Activated CD8-positive, alpha-beta T cell treated with anti-CD3 and anti-CD28 coated beads for 36 hours (primary cell): ENCODE measurements at regions of chr19 and their contacts with region 1.

Region 1: GRCh38 chr19:46600384-46601317 is 479 bp upstream of the CALM3 start:
- DNase-seq: peak; percentile 99
- ATAC-seq: peak; percentile 90
- H3K4me3 Mint-ChIP-seq: peak overlapping the region; percentile 99
- H3K27ac Mint-ChIP-seq: peak overlapping the region; percentile 100
- H3K4me1 Mint-ChIP-seq: peaks cover 27% of the 10 kb centered on the region
- H3K27me3 Mint-ChIP-seq: no peaks in the 10 kb centered on the region
- CTCF ChIP-seq: no peak

Region 2: DNA sequence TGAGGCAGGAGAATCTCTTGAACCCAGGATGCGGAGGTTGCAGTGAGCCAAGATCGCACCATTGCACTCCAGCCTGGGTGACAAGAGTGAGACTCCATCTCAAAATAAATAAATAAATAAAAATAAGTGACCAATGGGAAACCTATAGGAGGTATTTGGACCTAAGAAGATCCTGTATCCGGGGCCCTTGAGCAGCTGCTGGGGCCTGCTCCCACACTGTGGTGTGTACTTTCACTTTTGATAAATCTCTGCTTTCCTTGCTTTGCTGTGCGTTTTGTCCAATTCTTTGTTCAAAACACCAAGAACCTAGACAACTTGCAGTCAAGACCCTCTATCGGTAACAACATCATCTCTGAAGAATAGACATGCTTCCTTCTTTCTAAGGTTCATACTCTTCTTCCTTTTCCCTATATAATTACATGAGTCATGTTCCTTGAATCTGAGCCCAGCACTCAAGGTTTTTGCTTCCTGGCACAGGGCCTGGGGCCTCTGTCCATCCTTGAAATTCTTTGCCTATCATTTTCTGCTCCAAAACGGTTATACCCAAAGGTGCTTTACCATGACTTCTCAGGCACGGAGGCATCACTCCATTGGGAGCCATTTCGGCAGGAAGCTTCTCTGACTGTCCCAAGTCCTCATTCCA is 157.7 kb before region 1 on chr19:
- CTCF ChIA-PET with region 1: no interaction called
- POLR2A ChIA-PET with region 1: no interaction called
- intact Hi-C with region 1: no loop called
- DNase-seq: no peak
- ATAC-seq: no peak
- H3K4me3 Mint-ChIP-seq: no peak overlapping the region
- H3K27ac Mint-ChIP-seq: no peak overlapping the region
- H3K4me1 Mint-ChIP-seq: no peaks in the 10 kb centered on the region
- H3K27me3 Mint-ChIP-seq: peaks cover 6% of the 10 kb centered on the region
- CTCF ChIP-seq: no peak

Region 3: GRCh38 chr19:46579361-46579879 is 21.2 kb before region 1 on chr19:
- CTCF ChIA-PET with region 1: interaction called, 10 read pairs
- POLR2A ChIA-PET with region 1: interaction called, 7 read pairs
- intact Hi-C with region 1: no loop called
- DNase-seq: peak; percentile 76
- ATAC-seq: peak; percentile 47
- H3K4me3 Mint-ChIP-seq: no peak overlapping the region
- H3K27ac Mint-ChIP-seq: no peak overlapping the region
- H3K4me1 Mint-ChIP-seq: peaks cover 18% of the 10 kb centered on the region
- H3K27me3 Mint-ChIP-seq: no peaks in the 10 kb centered on the region
- CTCF ChIP-seq: peak; percentile 56

Region 4: DNA sequence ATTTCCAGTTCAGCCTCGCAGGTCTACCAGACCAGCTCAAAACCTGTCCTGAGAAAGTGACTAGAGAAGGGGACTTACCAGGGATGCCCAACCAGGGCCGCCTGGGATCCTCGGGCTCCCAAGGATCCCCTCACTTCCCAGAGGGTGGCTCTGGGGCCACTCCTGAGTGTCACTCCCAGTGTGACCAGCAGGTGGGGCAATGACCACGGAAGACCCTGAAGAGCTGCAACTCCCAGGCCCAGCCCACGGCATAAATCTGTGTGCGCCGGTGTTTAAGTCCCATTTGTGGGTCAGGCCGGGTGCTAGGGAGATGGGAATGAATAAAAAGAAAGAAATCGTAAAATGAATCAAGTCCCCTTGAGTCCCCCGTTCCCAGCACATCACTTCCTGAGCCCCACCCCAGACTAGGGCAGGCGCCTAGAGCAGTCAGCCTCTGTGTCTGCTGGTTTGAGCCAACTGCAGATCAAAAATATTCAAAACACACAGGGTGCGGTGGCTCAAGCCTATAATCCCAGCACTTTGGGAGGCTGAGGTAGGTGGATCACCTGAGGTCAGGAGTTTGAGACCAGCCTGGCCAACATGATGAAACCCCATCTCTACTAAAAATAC is 13.6 kb after region 1 on chr19:
- CTCF ChIA-PET with region 1: interaction called, 56 read pairs
- POLR2A ChIA-PET with region 1: interaction called, 232 read pairs
- intact Hi-C with region 1: no loop called
- DNase-seq: peak; percentile 92
- ATAC-seq: peak; percentile 55
- H3K4me3 Mint-ChIP-seq: peak overlapping the region; percentile 32
- H3K27ac Mint-ChIP-seq: peak overlapping the region; percentile 89
- H3K4me1 Mint-ChIP-seq: peaks cover 72% of the 10 kb centered on the region
- H3K27me3 Mint-ChIP-seq: no peaks in the 10 kb centered on the region
- CTCF ChIP-seq: peak; percentile 96

Region 5: GRCh38 chr19:46624958-46625661 is 24.5 kb after region 1 on chr19 and contains the start of gene PTGIR:
- CTCF ChIA-PET with region 1: interaction called, 5 read pairs
- POLR2A ChIA-PET with region 1: interaction called, 232 read pairs
- intact Hi-C with region 1: no loop called
- DNase-seq: peak; percentile 62
- ATAC-seq: peak; percentile 64
- H3K4me3 Mint-ChIP-seq: peak within 1 kb of the TSS; percentile 96
- H3K27ac Mint-ChIP-seq: peak within 1 kb of the TSS; percentile 96
- H3K4me1 Mint-ChIP-seq: peaks cover 49% of the 10 kb centered on the region
- H3K27me3 Mint-ChIP-seq: peaks cover 3% of the 10 kb centered on the region
- CTCF ChIP-seq: no peak
- total RNA-seq, gene PTGIR: 45.4 to 48.8 TPM

Region 6: DNA sequence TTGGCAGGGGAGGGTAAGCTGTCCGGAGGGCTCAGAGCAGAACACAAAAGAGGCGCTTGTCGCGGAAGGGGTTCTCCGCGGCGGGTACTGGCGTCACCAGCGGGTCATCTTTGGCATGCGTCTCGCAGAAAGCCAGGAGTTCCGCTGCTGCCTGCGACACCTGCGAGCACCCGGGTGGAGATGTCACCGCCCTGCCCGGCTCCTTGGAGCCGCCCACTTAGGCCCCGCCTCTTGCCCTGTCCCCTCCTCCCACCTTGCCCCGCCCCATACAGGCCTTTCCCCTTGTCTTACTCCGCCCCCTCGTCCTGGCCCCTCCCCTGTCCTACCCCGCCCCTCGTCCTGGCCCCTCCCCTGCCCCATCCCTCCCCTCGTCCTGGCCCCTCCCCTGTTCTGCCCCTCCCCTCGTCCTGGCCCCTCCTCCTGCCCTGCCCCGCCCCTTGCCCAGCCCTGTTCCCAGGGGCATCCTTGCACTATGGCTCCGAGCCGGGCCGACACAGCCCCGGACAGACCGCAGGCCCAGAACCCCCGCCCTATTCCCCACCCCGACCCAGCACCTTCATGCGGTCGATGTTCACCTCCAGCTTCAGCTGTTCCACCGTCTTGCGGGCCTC is 33.5 kb after region 1 on chr19:
- CTCF ChIA-PET with region 1: no interaction called
- POLR2A ChIA-PET with region 1: interaction called, 19 read pairs
- intact Hi-C with region 1: no loop called
- DNase-seq: peak; percentile 98
- ATAC-seq: peak; percentile 74
- H3K4me3 Mint-ChIP-seq: peak overlapping the region; percentile 82
- H3K27ac Mint-ChIP-seq: peak overlapping the region; percentile 66
- H3K4me1 Mint-ChIP-seq: peaks cover 18% of the 10 kb centered on the region
- H3K27me3 Mint-ChIP-seq: no peaks in the 10 kb centered on the region
- CTCF ChIP-seq: no peak

Region 7: GRCh38 chr19:46717034-46717723 is 116.5 kb after region 1 on chr19 and contains the start of gene PRKD2:
- CTCF ChIA-PET with region 1: no interaction called
- POLR2A ChIA-PET with region 1: interaction called, 12 read pairs
- intact Hi-C with region 1: no loop called
- DNase-seq: peak; percentile 92
- ATAC-seq: peak; percentile 62
- H3K4me3 Mint-ChIP-seq: peak within 1 kb of the TSS; percentile 86
- H3K27ac Mint-ChIP-seq: peak within 1 kb of the TSS; percentile 94
- H3K4me1 Mint-ChIP-seq: peaks cover 38% of the 10 kb centered on the region
- H3K27me3 Mint-ChIP-seq: no peaks in the 10 kb centered on the region
- CTCF ChIP-seq: no peak
- total RNA-seq, gene PRKD2: 81.1 to 86.0 TPM

Region 8: GRCh38 chr19:46788262-46788967 is 187.8 kb after region 1 on chr19 and contains the start of gene SLC1A5:
- CTCF ChIA-PET with region 1: no interaction called
- POLR2A ChIA-PET with region 1: interaction called, 20 read pairs
- intact Hi-C with region 1: no loop called
- DNase-seq: peak; percentile 99
- ATAC-seq: peak; percentile 83
- H3K4me3 Mint-ChIP-seq: peak within 1 kb of the TSS; percentile 98
- H3K27ac Mint-ChIP-seq: peak within 1 kb of the TSS; percentile 98
- H3K4me1 Mint-ChIP-seq: peaks cover 29% of the 10 kb centered on the region
- H3K27me3 Mint-ChIP-seq: no peaks in the 10 kb centered on the region
- CTCF ChIP-seq: no peak
- total RNA-seq, gene SLC1A5: 235 TPM